IMR-90 (cell line): ENCODE measurements at regions of chr1 and their contacts with region 1.

Region 1: DNA sequence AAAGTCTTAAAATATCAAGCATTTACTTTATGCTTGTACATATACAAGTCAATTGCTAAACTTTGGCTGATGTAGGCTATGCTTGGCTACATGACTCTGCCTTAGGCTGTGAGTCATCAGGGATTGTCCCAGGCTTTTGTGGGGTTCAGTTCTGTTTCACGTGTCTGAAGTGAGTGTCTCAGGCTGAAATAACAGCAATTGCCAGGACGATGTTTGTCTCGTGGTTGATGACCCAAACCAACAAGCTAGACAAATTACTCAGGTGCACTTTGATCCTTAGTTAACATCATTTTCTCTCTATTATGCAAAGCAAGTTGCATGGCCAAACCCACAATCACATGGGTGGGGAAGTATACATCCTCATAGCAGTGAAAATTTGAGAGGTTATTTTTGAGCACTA is 410.1 kb downstream of the BRINP3 start:
- DNase-seq: peak; percentile 89
- ATAC-seq: peak; percentile 80; the same call in 1 of the 2 replicates
- H3K4me3 ChIP-seq: no peak overlapping the region
- H3K27ac ChIP-seq: no peak overlapping the region
- H3K4me1 ChIP-seq: no peaks in the 10 kb centered on the region
- H3K27me3 ChIP-seq: no peaks in the 10 kb centered on the region
- CTCF ChIP-seq: no peak
- POLR2A ChIP-seq: no peak
- RAD21 ChIP-seq: no peak

Region 2: DNA sequence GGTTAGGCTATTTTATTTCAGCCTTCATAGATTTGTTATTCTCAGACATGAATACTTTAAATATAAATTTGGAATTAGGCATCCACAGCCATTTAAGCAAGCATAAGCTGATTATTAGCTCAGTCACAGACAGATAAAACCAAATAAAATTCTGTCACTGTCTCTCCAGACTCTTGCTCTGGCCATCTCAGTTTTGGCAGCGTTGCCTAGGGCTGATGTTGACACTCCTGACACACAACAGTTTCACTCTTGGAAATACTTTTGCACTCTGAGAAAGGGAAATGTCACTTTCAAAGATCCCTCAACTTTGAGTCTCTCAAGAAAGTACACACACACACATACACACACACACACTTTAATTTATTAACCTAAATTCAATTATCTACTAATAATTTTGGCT is 37.4 kb after region 1 on chr1:
- CTCF ChIA-PET with region 1: no interaction called
- POLR2A ChIA-PET with region 1: no interaction called
- dilution Hi-C with region 1: no loop called
- in situ Hi-C with region 1: no loop called
- intact Hi-C with region 1: loop called (anchors 5 kb)
- DNase-seq: no peak
- ATAC-seq: no peak
- H3K4me3 ChIP-seq: no peak overlapping the region
- H3K27ac ChIP-seq: no peak overlapping the region
- H3K4me1 ChIP-seq: no peaks in the 10 kb centered on the region
- H3K27me3 ChIP-seq: no peaks in the 10 kb centered on the region
- CTCF ChIP-seq: no peak
- POLR2A ChIP-seq: no peak
- RAD21 ChIP-seq: no peak

Region 3: DNA sequence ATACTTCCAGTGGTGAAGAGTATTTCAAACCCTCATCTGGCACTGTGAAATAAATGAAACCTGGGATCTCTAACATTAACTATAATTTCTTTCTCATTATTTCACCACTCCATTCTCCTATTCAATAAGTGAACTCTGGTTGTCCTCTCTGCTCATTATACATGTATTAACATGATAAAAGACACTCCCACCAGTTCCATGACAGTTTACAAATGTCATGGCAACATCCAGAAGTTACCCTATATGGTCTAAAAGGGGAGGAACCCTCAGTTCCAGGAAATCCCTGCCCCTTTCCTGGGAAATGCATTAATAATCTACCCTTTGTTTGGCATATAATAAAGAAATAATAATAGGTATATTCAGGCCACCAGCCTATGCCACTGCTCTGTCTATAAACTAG is 472.8 kb after region 1 on chr1:
- CTCF ChIA-PET with region 1: no interaction called
- POLR2A ChIA-PET with region 1: no interaction called
- dilution Hi-C with region 1: no loop called
- in situ Hi-C with region 1: no loop called
- intact Hi-C with region 1: no loop called
- DNase-seq: no peak
- ATAC-seq: no peak
- H3K4me3 ChIP-seq: no peak overlapping the region
- H3K27ac ChIP-seq: no peak overlapping the region
- H3K4me1 ChIP-seq: no peaks in the 10 kb centered on the region
- H3K27me3 ChIP-seq: no peaks in the 10 kb centered on the region
- CTCF ChIP-seq: no peak
- POLR2A ChIP-seq: no peak
- RAD21 ChIP-seq: no peak